ENCODE measurements at regions of chr20 and their contacts with region 1.

Region 1: GRCh38 chr20:53839423-53840176 is 230.8 kb downstream of the BCAS1 start:
- DNase-seq: peak; percentile 43 to 91 (median 58)
- ATAC-seq: peak; percentile 73
- H3K4me3 ChIP-seq: no peak overlapping the region
- H3K4me3 Mint-ChIP-seq: peak overlapping the region; percentile 70
- H3K27ac ChIP-seq: peak overlapping the region; percentile 51 to 54
- H3K27ac Mint-ChIP-seq: peak overlapping the region; percentile 87
- H3K4me1 ChIP-seq: peaks cover 88% of the 10 kb centered on the region
- H3K4me1 Mint-ChIP-seq: peaks cover 70% of the 10 kb centered on the region
- H3K27me3 ChIP-seq: no peaks in the 10 kb centered on the region
- H3K27me3 Mint-ChIP-seq: no peaks in the 10 kb centered on the region
- CTCF ChIP-seq: no peak

Region 2: DNA sequence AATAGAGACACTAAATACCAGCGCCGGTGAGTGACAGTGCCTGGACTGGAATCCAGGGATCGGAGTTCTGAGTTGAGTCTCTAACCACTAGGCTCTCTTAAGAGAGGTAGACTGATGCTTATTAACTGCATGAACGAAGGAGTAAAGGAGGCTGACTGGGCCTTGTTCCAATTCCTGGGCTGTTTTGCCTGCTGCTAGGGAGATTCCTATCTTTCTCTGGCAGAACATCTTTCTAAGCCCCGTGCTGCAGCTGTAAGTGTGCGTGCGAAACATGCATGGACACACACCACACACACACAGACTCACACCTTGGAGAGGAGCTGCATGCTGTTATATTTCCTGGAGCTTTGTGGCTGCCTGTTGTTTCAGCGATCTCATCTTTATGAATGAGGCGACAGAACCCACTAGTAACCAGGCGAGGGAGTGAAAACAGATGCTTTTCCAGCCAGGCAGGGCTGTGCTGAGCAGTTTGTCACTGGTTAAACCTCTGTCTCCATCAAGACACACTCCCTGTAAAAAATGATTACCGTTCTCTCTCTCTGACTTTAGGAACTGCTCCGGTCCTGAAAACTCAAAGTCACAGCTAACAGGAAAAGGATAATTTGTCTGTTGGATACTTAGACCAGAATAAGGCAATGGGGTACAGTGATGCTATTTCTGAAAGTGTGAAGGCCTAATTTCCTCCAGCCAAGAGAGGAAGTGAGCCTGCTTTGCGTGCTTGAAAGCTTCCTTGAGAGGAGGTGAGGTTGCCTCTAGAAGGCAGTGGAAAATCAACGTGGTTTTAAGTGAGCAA is 88.6 kb before region 1 on chr20:
- CTCF ChIA-PET with region 1: no interaction called
- POLR2A ChIA-PET with region 1: no interaction called
- intact Hi-C with region 1: loop called in 1 of 2 experiments (anchors 5 kb)
- DNase-seq: peak in 8 of 14 experiments; percentile 2 to 75 (median 34)
- ATAC-seq: peak; percentile 57
- H3K4me3 ChIP-seq: no peak overlapping the region
- H3K4me3 Mint-ChIP-seq: peak overlapping the region; percentile 65
- H3K27ac ChIP-seq: peak overlapping the region; percentile 53 to 74
- H3K27ac Mint-ChIP-seq: peak overlapping the region; percentile 93
- H3K4me1 ChIP-seq: peaks cover 60% of the 10 kb centered on the region
- H3K4me1 Mint-ChIP-seq: peaks cover 76% of the 10 kb centered on the region
- H3K27me3 ChIP-seq: no peaks in the 10 kb centered on the region
- H3K27me3 Mint-ChIP-seq: no peaks in the 10 kb centered on the region
- CTCF ChIP-seq: no peak

Region 3: GRCh38 chr20:53899351-53900167 is 60.0 kb after region 1 on chr20:
- CTCF ChIA-PET with region 1: no interaction called
- POLR2A ChIA-PET with region 1: interaction called, 4 read pairs
- intact Hi-C with region 1: loop called in 1 of 2 experiments (anchors 10 kb)
- DNase-seq: peak; percentile 32 to 90 (median 63)
- ATAC-seq: peak; percentile 99
- H3K4me3 ChIP-seq: no peak overlapping the region
- H3K4me3 Mint-ChIP-seq: no peak overlapping the region
- H3K27ac ChIP-seq: peak overlapping the region in 1 of 2 donors; percentile 37
- H3K27ac Mint-ChIP-seq: peak overlapping the region; percentile 76
- H3K4me1 ChIP-seq: peaks cover 15% of the 10 kb centered on the region
- H3K4me1 Mint-ChIP-seq: peaks cover 40% of the 10 kb centered on the region
- H3K27me3 ChIP-seq: no peaks in the 10 kb centered on the region
- H3K27me3 Mint-ChIP-seq: no peaks in the 10 kb centered on the region
- CTCF ChIP-seq: no peak